Thyroid gland (tissue), 4 donors: ENCODE measurements at regions of chr12 and their contacts with region 1.

Region 1: GRCh38 chr12:117367011-117367638 is 5.7 kb upstream of the NOS1 start:
- DNase-seq: peak; percentile 83 to 84
- H3K4me3 ChIP-seq: no peak overlapping the region
- H3K27ac ChIP-seq: no peak overlapping the region
- H3K4me1 ChIP-seq: no peaks in the 10 kb centered on the region
- H3K27me3 ChIP-seq: peaks cover 3% of the 10 kb centered on the region
- CTCF ChIP-seq: peak; percentile 81 to 94 (median 88)
- POLR2A ChIP-seq: no peak

Region 2: GRCh38 chr12:117587631-117588287 is 220.6 kb after region 1 on chr12:
- intact Hi-C with region 1: loop called (anchors 2 kb)
- DNase-seq: peak; percentile 65 to 66
- H3K4me3 ChIP-seq: no peak overlapping the region
- H3K27ac ChIP-seq: no peak overlapping the region
- H3K4me1 ChIP-seq: peaks cover 0 to under 1% of the 10 kb centered on the region in 2 donors
- H3K27me3 ChIP-seq: no peaks in the 10 kb centered on the region
- CTCF ChIP-seq: peak; percentile 75 to 93 (median 82)
- POLR2A ChIP-seq: no peak

Region 3: GRCh38 chr12:117671734-117672133 is 304.6 kb after region 1 on chr12:
- intact Hi-C with region 1: loop called (anchors 5 kb)
- DNase-seq: peak; percentile 44 to 56
- H3K4me3 ChIP-seq: no peak overlapping the region
- H3K27ac ChIP-seq: no peak overlapping the region
- H3K4me1 ChIP-seq: no peaks in the 10 kb centered on the region
- H3K27me3 ChIP-seq: no peaks in the 10 kb centered on the region
- CTCF ChIP-seq: peak in 3 of 6 experiments; percentile 17 to 52 (median 39)
- POLR2A ChIP-seq: no peak

Region 4: GRCh38 chr12:117836999-117837736 is 470.0 kb after region 1 on chr12:
- intact Hi-C with region 1: loop called (anchors 5 kb)
- DNase-seq: peak; percentile 81 to 83
- H3K4me3 ChIP-seq: no peak overlapping the region
- H3K27ac ChIP-seq: no peak overlapping the region
- H3K4me1 ChIP-seq: no peaks in the 10 kb centered on the region
- H3K27me3 ChIP-seq: no peaks in the 10 kb centered on the region
- CTCF ChIP-seq: peak; percentile 84 to 95 (median 92)
- POLR2A ChIP-seq: no peak